ENCODE measurements at regions of chr3 and their contacts with region 1.

Region 1: DNA sequence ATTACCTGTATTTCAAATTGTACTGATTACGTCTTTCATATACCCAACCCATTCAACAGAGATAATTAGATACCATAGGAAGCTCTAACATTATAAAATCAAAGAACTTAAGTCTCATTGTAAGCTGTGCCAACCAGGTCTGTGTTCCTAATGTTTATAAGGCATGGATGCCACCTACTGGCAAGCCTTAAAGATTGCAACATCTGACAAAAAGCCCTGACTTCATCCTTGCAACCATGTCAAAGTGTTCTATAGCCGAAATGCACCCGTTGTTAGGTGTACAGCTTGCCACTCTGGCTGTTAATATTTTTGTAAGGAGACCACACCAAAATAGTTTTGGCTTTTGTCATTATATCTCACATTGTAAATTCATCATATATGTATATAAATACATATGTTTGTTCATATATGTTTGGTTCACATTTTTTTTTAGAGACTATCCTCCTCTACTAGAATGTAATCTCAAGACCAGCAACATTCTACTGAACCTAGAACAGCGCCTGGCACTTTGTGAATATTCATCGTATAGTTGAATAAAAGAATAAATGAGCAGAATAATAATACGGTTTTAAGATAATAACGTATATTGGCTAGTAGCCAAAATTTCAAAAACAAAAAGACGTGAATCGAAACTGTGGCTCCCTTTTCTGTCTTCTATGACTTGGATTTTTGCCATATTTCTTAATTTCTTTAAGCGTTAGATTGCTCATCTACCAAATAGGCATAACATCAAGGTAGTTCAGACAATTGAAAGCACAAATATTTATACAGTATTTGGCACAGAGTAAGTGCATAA is 258.1 kb downstream of the TBL1XR1 start:
- DNase-seq: peak in 2 of 10 donors; percentile 17 to 20

Region 2: GRCh38 chr3:176824811-176825210 is 114.4 kb before region 1 on chr3:
- intact Hi-C with region 1: no loop called
- DNase-seq: no peak

Region 3: DNA sequence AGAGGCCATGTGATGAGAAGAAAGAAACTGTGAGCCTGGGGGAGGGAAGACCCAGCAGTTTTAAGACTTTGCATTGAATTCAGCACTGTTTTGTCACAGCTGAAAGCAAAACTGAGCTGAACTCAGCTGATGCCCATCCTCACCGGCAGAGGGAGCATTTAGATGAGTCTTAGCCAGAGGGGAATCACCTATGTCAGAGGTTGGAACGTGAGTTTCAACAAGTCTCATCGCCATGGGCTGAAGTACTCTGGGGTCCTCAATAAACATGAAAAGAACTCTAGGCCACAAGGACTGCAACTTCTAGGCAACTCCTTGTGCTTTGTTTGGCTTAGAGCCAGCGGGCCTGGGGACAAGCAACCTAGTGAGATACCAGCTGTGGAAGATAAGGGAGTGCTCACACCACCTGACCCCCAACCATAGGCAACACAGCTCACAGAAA is 66.4 kb before region 1 on chr3:
- intact Hi-C with region 1: loop called (anchors 2 kb)
- DNase-seq: peak in 3 of 10 donors; percentile 29 to 71 (median 32)

Region 4: DNA sequence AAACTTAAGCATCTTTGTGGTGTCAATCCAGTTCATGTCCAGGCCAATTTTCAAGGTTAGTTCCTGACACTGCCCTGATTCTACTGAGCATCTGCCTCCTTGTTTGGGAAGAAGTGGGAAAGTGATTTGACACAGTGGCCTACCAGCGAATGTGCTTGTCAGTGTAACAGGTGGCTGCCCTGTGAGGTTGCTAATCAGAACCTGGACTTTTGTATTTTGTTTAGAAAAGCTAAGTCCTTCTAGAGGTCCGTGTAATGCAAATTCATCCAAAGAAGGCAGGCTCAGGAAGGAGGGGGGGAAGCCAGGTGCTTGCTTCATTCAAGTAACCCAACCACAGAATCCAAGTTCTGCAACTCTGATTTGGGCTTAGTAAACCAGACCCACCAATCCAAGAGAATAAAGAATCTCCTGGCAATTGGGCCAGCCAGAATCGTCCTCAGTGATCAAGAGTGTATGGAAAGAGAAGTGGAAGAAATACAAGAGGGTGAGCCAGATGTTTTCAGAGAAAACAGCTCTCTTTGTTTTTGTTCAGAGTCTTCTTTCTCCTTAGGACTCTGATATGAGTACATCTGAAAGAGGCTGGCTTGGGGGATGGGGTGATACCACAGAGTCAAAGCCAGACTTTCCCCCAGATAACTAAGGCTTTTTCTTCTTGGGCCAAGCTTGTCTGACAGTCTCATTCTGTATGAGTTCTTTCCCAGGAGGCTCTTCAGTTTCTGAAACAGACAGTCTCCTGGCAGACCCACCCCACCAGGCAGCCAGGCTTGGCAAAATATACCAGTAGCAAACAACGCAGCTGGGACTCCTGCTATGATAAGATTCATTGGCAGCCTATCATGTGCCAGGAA is 767.0 kb after region 1 on chr3:
- intact Hi-C with region 1: no loop called
- DNase-seq: peak in 4 of 10 donors; percentile 3 to 67 (median 12)